OCI-LY7 (cell line): ENCODE measurements at regions of chr1 and their contacts with region 1.

Region 1: DNA sequence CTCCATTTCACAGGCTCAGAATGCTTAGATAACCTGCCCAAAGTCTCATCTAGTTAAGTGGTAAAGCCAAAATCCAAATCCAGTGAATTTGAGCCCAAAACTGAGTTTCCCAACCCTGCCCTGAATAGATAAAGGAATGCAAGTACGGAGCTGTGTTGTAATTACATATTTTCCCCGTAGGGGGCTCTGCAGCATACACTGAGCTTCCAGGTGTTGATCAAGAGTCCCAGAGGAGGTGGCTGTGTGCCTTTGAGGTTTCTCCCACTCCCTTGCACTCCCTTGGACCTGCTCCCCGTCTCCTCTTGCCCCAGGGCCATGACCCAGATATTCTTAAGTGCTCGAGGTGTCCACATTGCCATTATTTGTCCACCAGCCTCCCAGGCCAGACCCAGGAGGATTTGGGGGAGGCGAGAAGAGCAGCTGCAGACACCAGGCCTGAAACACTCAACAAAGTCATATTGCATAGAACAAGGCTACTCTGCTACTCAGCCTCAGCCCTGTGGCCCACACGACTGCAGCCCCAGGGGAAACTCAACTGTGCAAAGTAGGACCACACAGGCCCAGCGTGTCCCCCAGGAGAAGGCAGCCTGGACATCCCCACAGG is 18.4 kb upstream of the LY9 start:
- DNase-seq: peak; percentile 81
- H3K4me3 ChIP-seq: no peak overlapping the region
- H3K27ac ChIP-seq: no peak overlapping the region
- H3K4me1 ChIP-seq: peaks cover 19% of the 10 kb centered on the region
- CTCF ChIP-seq: peak; percentile 88

Region 2: GRCh38 chr1:160428655-160429054 is 348.9 kb before region 1 on chr1:
- CTCF ChIA-PET with region 1: no interaction called
- POLR2A ChIA-PET with region 1: no interaction called
- intact Hi-C with region 1: loop called (anchors 5 kb)
- DNase-seq: peak; percentile 81
- H3K4me3 ChIP-seq: peak overlapping the region; percentile 24
- H3K27ac ChIP-seq: peak overlapping the region; percentile 87
- H3K4me1 ChIP-seq: peaks cover 52% of the 10 kb centered on the region
- CTCF ChIP-seq: peak; percentile 99

Region 3: DNA sequence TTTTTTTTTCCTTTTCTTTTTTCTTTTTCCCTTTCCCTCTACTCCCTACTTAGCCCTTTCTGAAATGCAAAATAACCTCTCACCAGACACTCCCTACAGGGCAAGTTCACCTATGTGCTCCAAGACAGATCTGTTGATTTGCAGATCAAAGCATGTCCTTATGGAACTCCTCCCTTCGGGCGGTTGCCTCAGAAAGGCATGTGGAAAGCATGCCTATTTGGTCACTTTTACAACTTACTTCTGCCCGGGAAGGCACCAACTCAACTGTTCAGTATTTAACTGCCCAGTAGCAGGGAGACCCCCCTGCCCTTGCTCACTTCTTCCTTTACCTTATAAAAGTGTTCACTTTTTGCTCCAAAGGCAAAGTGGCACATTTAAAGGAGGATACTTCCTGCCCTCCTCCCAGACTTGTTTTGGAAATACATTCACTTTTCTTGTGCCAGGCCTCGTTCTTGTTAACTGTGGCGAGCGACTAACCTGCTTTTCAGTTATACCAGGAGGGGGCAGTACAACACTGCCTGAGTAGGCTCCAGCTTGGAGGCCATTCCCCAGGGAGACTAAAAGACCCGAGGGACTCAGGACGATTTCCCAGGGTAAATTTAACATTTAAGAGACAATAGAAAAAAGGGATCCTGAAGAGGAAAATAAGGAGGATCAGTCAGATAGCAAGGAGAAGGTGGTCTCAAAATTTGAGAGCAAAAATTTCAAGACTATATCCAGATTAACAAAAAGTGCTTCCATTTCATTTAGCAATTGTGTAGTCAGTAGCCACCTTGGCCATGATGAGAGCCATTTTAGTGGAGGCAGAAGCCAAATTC is 50.9 kb before region 1 on chr1:
- CTCF ChIA-PET with region 1: interaction called, 3 read pairs
- POLR2A ChIA-PET with region 1: interaction called, 5 read pairs
- intact Hi-C with region 1: loop called (anchors 2 kb)
- DNase-seq: peak; percentile 86
- H3K4me3 ChIP-seq: peak overlapping the region; percentile 12
- H3K27ac ChIP-seq: no peak overlapping the region
- H3K4me1 ChIP-seq: peaks cover 17% of the 10 kb centered on the region
- CTCF ChIP-seq: peak; percentile 99

Region 4: DNA sequence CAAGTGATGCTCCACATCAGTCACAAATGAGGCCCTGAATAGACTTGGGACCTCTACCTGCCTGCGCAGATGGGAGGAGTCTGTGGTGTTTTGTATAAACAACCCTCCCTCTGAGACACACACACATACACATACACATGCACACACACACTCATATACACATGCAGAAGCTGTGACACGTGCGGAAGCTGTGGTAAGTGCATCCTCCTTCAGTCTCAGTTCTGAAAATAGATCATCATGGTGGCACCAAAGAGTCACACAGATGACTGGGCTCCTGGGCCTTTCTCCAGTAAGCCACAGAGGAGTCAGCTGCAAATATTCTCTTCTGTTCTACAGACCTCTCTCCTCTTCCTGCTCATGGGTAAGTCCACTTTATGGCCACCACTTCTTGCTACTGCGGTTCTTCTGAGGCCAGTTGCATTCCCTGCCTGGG is 18.4 kb after region 1 on chr1 and contains the start of gene LY9:
- CTCF ChIA-PET with region 1: interaction called, 3 read pairs
- POLR2A ChIA-PET with region 1: interaction called, 32 read pairs
- intact Hi-C with region 1: loop called (anchors 1 kb)
- DNase-seq: peak; percentile 94
- H3K4me3 ChIP-seq: peak within 1 kb of the TSS; percentile 76
- H3K27ac ChIP-seq: peak within 1 kb of the TSS; percentile 82
- H3K4me1 ChIP-seq: peaks cover 51% of the 10 kb centered on the region
- CTCF ChIP-seq: no peak
- total RNA-seq, gene LY9: 23.7 and 28.4 TPM in 2 replicates

Region 5: GRCh38 chr1:160830321-160831153 is 52.9 kb after region 1 on chr1:
- CTCF ChIA-PET with region 1: interaction called, 10 read pairs
- POLR2A ChIA-PET with region 1: interaction called, 3 read pairs
- intact Hi-C with region 1: loop called (anchors 1 kb)
- DNase-seq: peak; percentile 80
- H3K4me3 ChIP-seq: no peak overlapping the region
- H3K27ac ChIP-seq: no peak overlapping the region
- H3K4me1 ChIP-seq: no peaks in the 10 kb centered on the region
- CTCF ChIP-seq: peak; percentile 92

Region 6: DNA sequence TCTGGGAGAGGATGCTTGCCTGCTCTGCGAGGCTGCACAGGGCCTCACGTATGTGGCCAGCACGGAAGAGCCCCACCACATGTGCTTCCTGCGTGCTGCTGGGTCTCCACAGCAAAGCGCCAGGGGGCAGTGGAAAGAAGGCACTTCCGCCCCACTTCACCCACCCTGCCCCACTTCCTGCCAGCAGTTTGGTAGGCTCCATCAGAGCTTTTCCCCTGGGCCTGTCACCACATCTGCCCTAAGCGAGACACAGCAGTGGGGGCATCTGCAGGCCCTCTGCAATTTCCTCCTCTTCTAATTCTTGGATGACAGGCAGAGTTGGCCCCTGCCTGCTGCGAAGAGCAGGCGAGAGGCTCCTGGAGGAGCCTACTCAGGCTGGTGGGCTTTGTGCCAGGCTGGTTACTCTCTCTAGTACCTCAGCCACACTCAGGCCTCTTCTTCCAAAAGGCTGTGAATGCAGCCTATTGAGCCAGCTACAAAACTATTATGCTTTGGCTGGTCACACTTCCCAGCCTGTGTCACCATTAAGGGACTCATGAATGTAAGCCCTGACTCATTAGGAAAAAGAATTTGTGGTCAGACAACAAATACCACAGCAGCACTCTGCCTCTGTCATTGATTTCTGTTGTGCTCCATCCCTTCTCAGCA is 60.1 kb after region 1 on chr1:
- CTCF ChIA-PET with region 1: interaction called, 10 read pairs
- POLR2A ChIA-PET with region 1: interaction called, 8 read pairs
- intact Hi-C with region 1: no loop called
- DNase-seq: peak; percentile 97
- H3K4me3 ChIP-seq: peak overlapping the region; percentile 10
- H3K27ac ChIP-seq: peak overlapping the region; percentile 63
- H3K4me1 ChIP-seq: peaks cover 39% of the 10 kb centered on the region
- CTCF ChIP-seq: peak; percentile 69

Region 7: GRCh38 chr1:160951443-160952128 is 174.0 kb after region 1 on chr1:
- CTCF ChIA-PET with region 1: interaction called, 8 read pairs
- POLR2A ChIA-PET with region 1: no interaction called
- intact Hi-C with region 1: loop called (anchors 2 kb)
- DNase-seq: peak; percentile 80
- H3K4me3 ChIP-seq: no peak overlapping the region
- H3K27ac ChIP-seq: no peak overlapping the region
- H3K4me1 ChIP-seq: no peaks in the 10 kb centered on the region
- CTCF ChIP-seq: peak; percentile 93

Region 8: GRCh38 chr1:160993544-160994193 is 216.1 kb after region 1 on chr1:
- CTCF ChIA-PET with region 1: no interaction called
- POLR2A ChIA-PET with region 1: no interaction called
- intact Hi-C with region 1: no loop called
- DNase-seq: peak; percentile 50
- H3K4me3 ChIP-seq: no peak overlapping the region
- H3K27ac ChIP-seq: no peak overlapping the region
- H3K4me1 ChIP-seq: peaks cover 5% of the 10 kb centered on the region
- CTCF ChIP-seq: peak; percentile 75